ENCODE measurements at regions of chr16 and their contacts with region 1.

Region 1: GRCh38 chr16:58661199-58661830 is 23.3 kb downstream of the SLC38A7 start:
- DNase-seq: peak; percentile 78
- ATAC-seq: peak; percentile 98
- H3K4me3 ChIP-seq: no peak overlapping the region
- H3K27ac ChIP-seq: no peak overlapping the region
- H3K4me1 ChIP-seq: peaks cover 0 to 4% of the 10 kb centered on the region in 2 experiments; a peak in 1 of 4 replicates
- H3K27me3 ChIP-seq: no peaks in the 10 kb centered on the region
- CTCF ChIP-seq: peak; percentile 71 to 81 (median 78)
- POLR2A ChIP-seq: no peak
- RAD21 ChIP-seq: peak; percentile 91

Region 2: GRCh38 chr16:58336332-58337089 is 324.8 kb before region 1 on chr16:
- CTCF ChIA-PET with region 1: interaction called, 6 read pairs
- POLR2A ChIA-PET with region 1: no interaction called
- RAD21 ChIA-PET with region 1: no interaction called
- intact Hi-C with region 1: loop called (anchors 5 kb)
- DNase-seq: peak; percentile 77
- ATAC-seq: peak; percentile 81
- H3K4me3 ChIP-seq: 0 out of 4 replicates have a peak overlapping the region, but pooled peaks of 1 of the 2 experiments have one; percentile 2
- H3K27ac ChIP-seq: no peak overlapping the region
- H3K4me1 ChIP-seq: peaks cover 6 to 10% of the 10 kb centered on the region in 2 experiments
- H3K27me3 ChIP-seq: no peaks in the 10 kb centered on the region
- CTCF ChIP-seq: peak; percentile 91 to 98 (median 95)
- POLR2A ChIP-seq: no peak
- RAD21 ChIP-seq: peak; percentile 89

Region 3: DNA sequence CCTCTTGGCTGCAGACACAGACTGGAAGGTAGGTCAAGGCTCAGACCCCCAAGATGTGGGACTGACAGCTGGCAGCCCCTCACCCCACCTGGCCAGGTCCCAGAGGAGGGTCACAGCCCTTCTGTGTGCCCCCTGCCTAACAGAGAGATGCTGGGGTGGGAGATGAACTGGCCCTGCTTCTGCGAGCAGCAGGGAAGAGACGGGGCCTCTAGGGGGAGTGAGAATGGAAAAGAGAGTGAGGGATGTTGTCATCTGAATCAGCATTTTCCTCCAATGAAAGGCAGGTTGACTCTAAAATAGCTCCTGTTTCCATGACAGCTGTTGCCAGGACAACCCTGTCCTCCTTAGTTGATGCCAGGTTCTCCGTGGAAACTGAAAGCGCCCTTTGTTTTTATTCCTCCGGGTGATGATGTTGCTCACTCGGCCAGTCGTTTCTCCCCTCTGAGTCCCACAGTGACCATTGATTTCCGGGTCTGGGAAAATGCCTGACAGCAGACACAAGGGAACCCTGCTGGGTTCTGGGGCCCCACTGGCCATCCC is 166.3 kb before region 1 on chr16:
- CTCF ChIA-PET with region 1: interaction called, 14 read pairs
- POLR2A ChIA-PET with region 1: interaction called, 3 read pairs
- RAD21 ChIA-PET with region 1: no interaction called
- intact Hi-C with region 1: loop called (anchors 5 kb)
- DNase-seq: peak; percentile 92
- ATAC-seq: peak; percentile 58
- H3K4me3 ChIP-seq: no peak overlapping the region
- H3K27ac ChIP-seq: no peak overlapping the region
- H3K4me1 ChIP-seq: peaks cover 0 to 25% of the 10 kb centered on the region in 2 experiments; a peak in 3 of 4 replicates
- H3K27me3 ChIP-seq: no peaks in the 10 kb centered on the region
- CTCF ChIP-seq: peak; percentile 48 to 77 (median 61); a peak in 5 of 6 replicates
- POLR2A ChIP-seq: no peak
- RAD21 ChIP-seq: peak; percentile 37; the same call in 1 of the 2 replicates

Region 4: DNA sequence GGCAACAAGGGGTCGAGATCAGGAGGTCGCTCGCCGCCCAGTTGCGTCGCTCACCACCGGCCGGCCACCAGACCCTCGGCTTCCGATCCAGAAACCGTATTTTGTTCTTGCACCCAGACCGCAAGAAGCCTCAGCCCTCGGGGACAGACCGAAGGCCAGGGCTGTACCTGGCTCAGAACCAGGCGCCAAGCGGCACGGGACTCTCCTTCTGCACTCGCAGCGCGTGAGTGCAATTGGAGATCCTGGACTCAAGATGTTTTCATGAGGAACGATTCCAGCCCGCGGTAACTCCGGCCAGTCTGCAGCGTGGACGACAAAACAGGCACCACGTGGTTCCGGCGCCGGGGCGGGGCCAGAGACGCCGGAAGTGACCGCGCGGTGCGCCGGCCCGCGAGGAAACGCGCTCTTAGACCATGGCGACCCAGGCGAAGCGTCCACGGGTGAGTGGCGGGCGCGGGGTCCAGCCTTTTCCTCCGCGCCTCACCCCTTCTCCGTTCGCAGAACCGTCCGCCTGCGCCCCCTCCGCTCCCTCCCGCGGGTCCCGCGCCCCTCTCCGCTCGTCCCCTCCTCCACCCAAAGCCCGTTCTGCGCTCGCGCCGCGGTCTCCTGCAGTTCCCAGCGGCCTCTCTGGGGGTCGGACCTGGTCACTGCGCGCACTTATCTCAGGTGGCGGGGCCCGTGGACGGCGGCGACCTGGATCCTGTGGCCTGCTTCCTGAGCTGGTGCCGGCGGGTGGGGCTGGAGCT is 146.0 kb before region 1 on chr16 and contains the start of gene SETD6:
- CTCF ChIA-PET with region 1: interaction called, 35 read pairs
- POLR2A ChIA-PET with region 1: interaction called, 4 read pairs
- RAD21 ChIA-PET with region 1: interaction called in 1 of 2 experiments, 3 read pairs
- intact Hi-C with region 1: loop called (anchors 1 kb)
- DNase-seq: peak; percentile 70
- ATAC-seq: peak; percentile 80
- H3K4me3 ChIP-seq: peak within 1 kb of the TSS; percentile 72 to 85
- H3K27ac ChIP-seq: peak within 1 kb of the TSS; percentile 88
- H3K4me1 ChIP-seq: peaks cover 5 to 22% of the 10 kb centered on the region in 2 experiments; a peak in 3 of 4 replicates
- H3K27me3 ChIP-seq: no peaks in the 10 kb centered on the region
- CTCF ChIP-seq: no peak; a peak in 1 of 6 replicates
- POLR2A ChIP-seq: peak; percentile 60
- RAD21 ChIP-seq: no peak
- total RNA-seq, gene SETD6: 26.6 TPM